RWPE1 (cell line): ENCODE measurements at regions of chr13 and their contacts with region 1.

Region 1: GRCh38 chr13:50052478-50052877 is 37.2 kb downstream of the KCNRG start:
- DNase-seq: no peak
- H3K27ac ChIP-seq: no peak overlapping the region
- CTCF ChIP-seq: no peak

Region 2: DNA sequence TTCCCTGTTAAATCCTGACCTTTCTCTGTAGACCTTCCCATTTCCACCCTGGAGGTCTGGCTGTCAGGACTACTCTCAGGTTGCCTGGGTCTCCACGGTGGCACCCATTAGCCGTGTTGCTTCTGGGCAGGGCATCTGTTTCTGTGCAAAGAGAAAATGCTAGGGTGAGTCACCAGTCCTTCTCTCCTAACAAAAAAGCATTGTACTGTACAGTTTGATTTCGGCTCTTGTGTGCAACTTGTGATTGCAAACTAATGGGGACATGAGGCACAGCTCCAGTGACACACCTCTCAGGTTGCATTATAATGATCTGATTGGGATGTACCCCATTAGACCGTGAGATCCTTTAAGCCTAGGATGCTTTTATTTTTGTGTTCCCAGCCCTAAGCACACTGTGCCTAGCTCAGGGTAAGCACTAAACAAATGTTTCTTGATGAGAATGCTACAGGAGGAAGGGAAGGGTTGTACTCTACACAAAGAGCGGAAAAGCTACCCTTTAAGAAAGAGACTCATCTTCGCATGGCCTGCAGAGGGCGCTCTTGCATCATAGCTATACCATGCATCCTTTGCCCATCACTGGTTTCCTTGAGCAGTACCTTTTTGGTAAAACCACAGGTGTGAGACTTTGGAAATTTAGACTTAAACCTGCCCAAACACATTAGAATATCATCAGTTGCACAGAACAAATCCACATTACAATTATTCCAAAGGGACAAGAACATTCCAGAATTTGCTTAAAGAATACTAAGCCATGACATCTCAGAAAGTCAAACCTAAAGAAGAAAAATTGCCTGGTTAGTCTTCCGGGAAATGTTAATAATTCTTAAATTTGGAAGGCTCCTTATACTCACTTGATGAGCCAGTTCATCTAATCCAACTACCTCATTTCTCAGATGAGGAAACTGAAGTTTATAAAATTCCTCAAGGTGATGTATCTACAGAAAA is 75.9 kb before region 1 on chr13:
- CTCF ChIA-PET with region 1: interaction called, 10 read pairs
- POLR2A ChIA-PET with region 1: no interaction called
- DNase-seq: peak; percentile 60
- H3K27ac ChIP-seq: no peak overlapping the region
- CTCF ChIP-seq: peak; percentile 83

Region 3: GRCh38 chr13:50125537-50126262 is 73.2 kb after region 1 on chr13:
- CTCF ChIA-PET with region 1: no interaction called
- POLR2A ChIA-PET with region 1: no interaction called
- DNase-seq: peak; percentile 79
- H3K27ac ChIP-seq: peak overlapping the region; percentile 99
- CTCF ChIP-seq: no peak